ENCODE measurements at regions of chr22 and their contacts with region 1.

Region 1: DNA sequence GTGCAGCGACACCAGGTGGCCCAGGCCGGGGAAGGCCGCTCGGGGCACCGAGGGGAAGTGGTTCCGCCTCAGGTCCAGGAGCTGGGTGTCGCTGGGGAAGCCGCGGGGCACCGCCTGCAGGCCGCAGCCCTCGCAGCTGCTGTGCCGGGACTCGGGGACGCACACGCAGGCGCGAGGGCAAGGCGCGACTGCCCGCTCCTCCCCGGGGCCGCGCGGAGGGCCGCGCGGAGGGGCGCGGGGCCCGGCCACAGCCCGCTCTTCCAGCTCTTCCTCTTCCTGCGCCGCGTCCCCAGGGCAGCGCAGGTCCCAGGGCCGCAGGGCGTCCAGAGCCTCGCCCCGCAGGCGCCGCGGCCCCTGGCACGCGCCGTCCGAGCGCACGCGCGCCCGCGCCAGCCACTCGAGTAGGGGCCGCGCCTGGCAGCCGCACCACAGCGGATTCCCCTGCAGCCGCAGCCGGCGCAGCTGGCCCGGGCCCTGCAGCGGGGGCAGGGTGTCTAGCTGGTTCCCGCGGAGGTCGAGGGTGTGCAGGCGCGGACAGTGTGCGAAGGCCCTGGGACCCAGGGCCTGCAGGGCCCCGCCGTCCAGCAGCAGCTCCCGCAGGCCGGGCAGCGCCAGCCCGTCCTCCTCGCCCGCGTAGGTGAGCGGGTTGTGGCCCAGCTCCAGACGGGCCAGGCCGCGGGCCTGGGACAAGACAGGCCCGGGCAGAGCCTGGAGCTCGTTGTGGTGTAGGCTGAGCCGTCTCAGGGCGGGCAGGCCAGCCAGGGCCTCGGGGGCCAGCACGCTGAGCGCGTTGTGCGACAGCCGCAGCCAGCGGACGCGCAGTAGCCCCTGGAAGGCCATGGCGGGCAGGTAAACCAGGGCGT is 2.8 kb downstream of the CHADL start:
- DNase-seq: peak; percentile 64 to 77
- ATAC-seq: peak; percentile 35 to 87 (median 74)
- H3K4me3 ChIP-seq: peak overlapping the region in 9 of 10 donors; percentile 28 to 55 (median 50)
- H3K27ac ChIP-seq: peak overlapping the region in 9 of 10 donors; percentile 46 to 76 (median 64)
- H3K4me1 ChIP-seq: peaks cover 8 to 37% (median 20%) of the 10 kb centered on the region in 9 donors
- H3K27me3 ChIP-seq: no peaks in the 10 kb centered on the region
- CTCF ChIP-seq: peak in 8 of 9 donors; percentile 35 to 77 (median 67)

Region 2: DNA sequence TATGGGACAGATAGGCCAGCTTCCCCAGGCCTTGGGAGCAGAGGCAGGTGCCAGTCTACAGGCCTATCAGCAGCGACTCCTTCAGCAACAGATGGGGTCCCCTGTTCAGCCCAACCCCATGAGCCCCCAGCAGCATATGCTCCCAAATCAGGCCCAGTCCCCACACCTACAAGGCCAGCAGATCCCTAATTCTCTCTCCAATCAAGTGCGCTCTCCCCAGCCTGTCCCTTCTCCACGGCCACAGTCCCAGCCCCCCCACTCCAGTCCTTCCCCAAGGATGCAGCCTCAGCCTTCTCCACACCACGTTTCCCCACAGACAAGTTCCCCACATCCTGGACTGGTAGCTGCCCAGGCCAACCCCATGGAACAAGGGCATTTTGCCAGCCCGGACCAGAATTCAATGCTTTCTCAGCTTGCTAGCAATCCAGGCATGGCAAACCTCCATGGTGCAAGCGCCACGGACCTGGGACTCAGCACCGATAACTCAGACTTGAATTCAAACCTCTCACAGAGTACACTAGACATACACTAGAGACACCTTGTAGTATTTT is 59.4 kb before region 1 on chr22:
- intact Hi-C with region 1: loop called in 1 of 10 experiments (anchors 10 kb)
- DNase-seq: peak; percentile 57 to 70
- ATAC-seq: peak; percentile 19 to 71 (median 61)
- H3K4me3 ChIP-seq: no peak overlapping the region
- H3K27ac ChIP-seq: no peak overlapping the region
- H3K4me1 ChIP-seq: peaks cover 0 to 40% (median 13%) of the 10 kb centered on the region in 9 donors
- H3K27me3 ChIP-seq: no peaks in the 10 kb centered on the region
- CTCF ChIP-seq: no peak

Region 3: GRCh38 chr22:41352051-41352450 is 114.1 kb after region 1 on chr22:
- intact Hi-C with region 1: no loop called
- DNase-seq: no peak
- ATAC-seq: no peak
- H3K4me3 ChIP-seq: no peak overlapping the region
- H3K27ac ChIP-seq: peak overlapping the region in 1 of 10 donors; percentile 21
- H3K4me1 ChIP-seq: peaks cover 0 to 13% (median 5%) of the 10 kb centered on the region in 9 donors
- H3K27me3 ChIP-seq: no peaks in the 10 kb centered on the region
- CTCF ChIP-seq: no peak

Measured in heart right ventricle (tissue), 16 donors.